ENCODE measurements at regions of chr2 and their contacts with region 1.

Region 1: DNA sequence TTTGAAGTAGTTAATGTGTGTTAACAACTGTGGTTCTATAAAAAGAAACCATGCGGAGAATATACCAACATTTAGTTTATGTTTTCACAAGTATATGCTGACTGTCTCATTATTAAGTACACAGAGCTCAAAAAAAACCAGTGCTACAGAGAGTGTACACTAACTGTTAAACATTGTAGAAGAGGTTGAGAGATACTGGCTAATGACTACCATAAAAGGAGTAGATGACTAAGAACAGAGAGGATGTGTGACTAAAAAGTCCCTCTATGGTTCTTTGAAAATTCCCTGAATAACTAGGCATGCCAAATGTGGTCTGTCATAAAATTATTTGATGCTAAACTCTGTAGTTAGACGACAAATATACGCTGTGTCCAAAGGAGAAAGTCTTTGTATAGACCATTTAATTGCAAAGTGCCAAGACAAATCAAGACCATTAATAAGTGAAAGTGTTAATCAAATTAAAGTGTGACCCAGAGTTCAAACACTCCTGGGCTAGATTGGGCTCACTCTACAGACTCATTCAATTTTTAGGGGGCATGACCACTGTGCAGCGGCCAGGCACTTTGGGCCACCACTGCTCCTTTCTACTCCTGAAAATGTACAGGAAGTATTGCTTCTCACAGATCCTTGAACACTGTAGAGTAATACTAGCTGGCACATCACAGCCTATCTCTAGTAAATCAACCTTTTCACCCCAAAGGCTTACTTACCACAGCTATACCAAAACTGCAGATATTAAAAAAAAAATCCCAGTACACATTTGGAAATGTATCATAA is 45.1 kb upstream of the SERTAD2 start:
- DNase-seq: peak; percentile 27
- ATAC-seq: peak; percentile 51
- H3K4me3 ChIP-seq: peak overlapping the region in 1 of 5 experiments; percentile 36
- H3K4me3 Mint-ChIP-seq: peak overlapping the region; percentile 37
- H3K27ac ChIP-seq: no peak overlapping the region
- H3K27ac Mint-ChIP-seq: peak overlapping the region; percentile 51
- H3K4me1 ChIP-seq: peaks cover 22 to 24% of the 10 kb centered on the region in 2 donors
- H3K4me1 Mint-ChIP-seq: peaks cover 40% of the 10 kb centered on the region
- H3K27me3 ChIP-seq: no peaks in the 10 kb centered on the region
- H3K27me3 Mint-ChIP-seq: no peaks in the 10 kb centered on the region
- CTCF ChIP-seq: no peak

Region 2: GRCh38 chr2:64683771-64684695 is 14.8 kb before region 1 on chr2:
- CTCF ChIA-PET with region 1: interaction called, 6 read pairs
- POLR2A ChIA-PET with region 1: no interaction called
- intact Hi-C with region 1: loop called (anchors 2 kb)
- DNase-seq: no peak
- ATAC-seq: no peak
- H3K4me3 ChIP-seq: no peak overlapping the region
- H3K4me3 Mint-ChIP-seq: no peak overlapping the region
- H3K27ac ChIP-seq: no peak overlapping the region
- H3K27ac Mint-ChIP-seq: no peak overlapping the region
- H3K4me1 ChIP-seq: peaks cover 21 to 24% of the 10 kb centered on the region in 2 donors
- H3K4me1 Mint-ChIP-seq: peaks cover 33% of the 10 kb centered on the region
- H3K27me3 ChIP-seq: no peaks in the 10 kb centered on the region
- H3K27me3 Mint-ChIP-seq: no peaks in the 10 kb centered on the region
- CTCF ChIP-seq: no peak

Measured in B cell (primary cell).